Right cardiac atrium (tissue), 5 donors: ENCODE measurements at regions of chr5 and their contacts with region 1.

Region 1: DNA sequence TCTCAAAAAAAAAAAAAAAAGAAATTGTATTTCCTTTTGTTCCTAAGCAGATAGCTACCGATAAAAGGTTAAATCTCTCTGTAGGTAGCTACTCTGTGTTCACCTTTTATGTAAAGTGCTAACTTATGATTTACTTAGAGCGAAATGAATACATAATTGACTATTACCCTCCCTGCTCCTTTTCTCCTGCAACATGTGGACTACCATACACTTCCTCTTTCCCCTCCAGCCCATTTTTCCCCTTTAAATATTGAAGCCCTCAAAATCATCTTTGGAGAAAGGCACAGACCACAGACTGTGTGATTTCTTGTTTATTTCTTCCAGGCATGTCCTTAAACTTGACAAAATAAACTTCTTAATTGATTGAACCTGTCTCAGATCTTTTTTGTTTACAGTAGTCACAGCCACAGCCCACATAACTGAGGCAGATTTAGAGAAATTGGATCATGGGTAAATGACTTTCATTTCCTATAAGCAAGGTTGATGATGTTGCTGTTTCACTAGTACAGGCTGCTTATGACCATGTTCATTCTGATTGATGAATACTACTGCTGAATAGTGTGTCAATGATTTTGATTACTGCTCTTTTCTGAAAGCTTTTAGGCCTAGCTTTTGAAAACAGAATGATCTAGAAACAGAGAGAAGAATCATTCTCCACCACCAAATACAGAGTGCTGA is 59.2 kb downstream of the PHAX start:
- DNase-seq: no peak
- ATAC-seq: no peak
- H3K4me3 ChIP-seq: no peak overlapping the region
- H3K27ac ChIP-seq: no peak overlapping the region
- H3K4me1 ChIP-seq: no peaks in the 10 kb centered on the region
- H3K27me3 ChIP-seq: no peaks in the 10 kb centered on the region

Region 2: GRCh38 chr5:126808521-126808988 is 148.6 kb after region 1 on chr5:
- intact Hi-C with region 1: loop called in 1 of 4 experiments (anchors 10 kb)
- DNase-seq: no peak
- ATAC-seq: no peak
- H3K4me3 ChIP-seq: no peak overlapping the region
- H3K27ac ChIP-seq: no peak overlapping the region
- H3K4me1 ChIP-seq: peaks cover 4% of the 10 kb centered on the region
- H3K27me3 ChIP-seq: no peaks in the 10 kb centered on the region